Vagina (tissue), 2 donors: ENCODE measurements at regions of chr3 and their contacts with region 1.

Region 1: GRCh38 chr3:160739079-160739478 is 17.0 kb upstream of the PPM1L start:
- DNase-seq: no peak
- H3K4me3 ChIP-seq: no peak overlapping the region
- H3K27ac ChIP-seq: no peak overlapping the region
- H3K4me1 ChIP-seq: no peaks in the 10 kb centered on the region
- H3K27me3 ChIP-seq: no peaks in the 10 kb centered on the region
- CTCF ChIP-seq: no peak
- POLR2A ChIP-seq: no peak

Region 2: DNA sequence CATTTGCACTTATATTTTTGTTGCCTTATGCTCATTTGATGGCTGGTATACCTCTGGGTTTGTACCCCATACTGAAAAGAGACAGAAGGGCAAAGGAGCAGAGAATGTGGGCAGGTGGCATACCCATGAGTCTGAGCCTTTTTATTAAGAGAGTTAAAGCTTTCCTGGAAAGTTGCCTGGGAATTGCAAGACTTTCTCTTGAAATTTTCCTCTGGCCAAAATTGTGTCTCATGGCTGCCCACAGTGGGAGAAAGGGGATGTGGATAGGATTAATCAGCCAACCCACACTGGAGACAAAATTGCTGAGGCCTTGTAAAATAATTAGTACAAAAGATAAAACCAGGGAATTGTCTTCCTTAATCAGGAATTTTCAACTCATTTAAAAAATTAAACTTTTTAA is 473.8 kb after region 1 on chr3:
- intact Hi-C with region 1: loop called (anchors 5 kb)
- DNase-seq: no peak
- H3K4me3 ChIP-seq: no peak overlapping the region
- H3K27ac ChIP-seq: no peak overlapping the region
- H3K4me1 ChIP-seq: no peaks in the 10 kb centered on the region
- H3K27me3 ChIP-seq: no peaks in the 10 kb centered on the region
- CTCF ChIP-seq: no peak
- POLR2A ChIP-seq: no peak